ENCODE measurements at regions of chr1 and their contacts with region 1.

Region 1: GRCh38 chr1:233394860-233395717 is 67.6 kb downstream of the MAP3K21 start:
- DNase-seq: peak; percentile 50
- H3K4me3 ChIP-seq: no peak overlapping the region
- H3K27ac ChIP-seq: no peak overlapping the region
- H3K4me1 ChIP-seq: no peaks in the 10 kb centered on the region
- CTCF ChIP-seq: peak; percentile 93

Region 2: DNA sequence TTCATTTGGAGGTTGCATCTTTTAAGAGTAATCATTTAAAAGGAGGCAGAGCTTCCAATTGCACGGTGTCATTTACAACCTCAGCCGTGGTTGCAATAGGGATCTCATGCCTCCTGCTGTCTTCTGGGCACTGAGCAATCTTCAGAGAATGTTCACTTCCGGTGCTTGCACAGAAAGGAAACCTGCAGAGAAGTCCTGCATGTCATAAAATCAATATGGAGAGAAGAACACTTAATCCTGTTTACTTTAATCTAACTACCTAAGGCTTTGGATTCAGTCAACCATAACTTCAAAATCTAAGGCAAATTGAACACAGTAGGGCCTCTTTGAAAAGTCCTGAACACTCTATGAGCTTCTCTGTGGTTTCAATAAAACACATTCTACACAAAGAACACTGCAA is 601.1 kb before region 1 on chr1:
- CTCF ChIA-PET with region 1: no interaction called
- POLR2A ChIA-PET with region 1: no interaction called
- intact Hi-C with region 1: no loop called
- DNase-seq: no peak
- H3K4me3 ChIP-seq: no peak overlapping the region
- H3K27ac ChIP-seq: no peak overlapping the region
- H3K4me1 ChIP-seq: no peaks in the 10 kb centered on the region
- CTCF ChIP-seq: no peak

Region 3: DNA sequence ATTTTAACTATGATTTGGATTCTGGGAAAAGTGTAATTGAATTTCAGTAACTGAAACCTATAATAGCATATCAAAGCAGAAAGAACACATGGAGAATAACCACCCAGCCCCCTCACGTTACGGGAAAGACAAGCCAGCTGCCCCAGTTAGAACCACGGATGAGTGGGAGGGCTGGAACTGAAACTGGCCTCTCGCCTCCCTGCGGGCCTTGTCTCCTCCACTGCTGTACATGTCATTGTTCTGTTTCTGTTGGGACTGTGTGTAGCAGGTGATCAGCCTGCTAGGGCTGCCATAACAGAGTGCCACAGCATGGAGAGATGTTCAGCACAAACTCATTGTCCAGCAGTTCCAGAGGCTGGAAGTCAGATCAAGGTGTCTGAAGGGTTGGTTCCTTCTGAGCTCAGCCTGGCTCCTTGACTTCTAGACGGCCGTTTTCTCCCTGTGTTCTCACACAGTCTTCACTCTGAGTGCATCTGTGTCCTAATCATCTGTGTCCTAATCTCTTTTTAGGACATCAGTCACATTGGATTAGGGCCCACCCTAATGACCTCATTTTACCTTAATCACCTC is 15.1 kb before region 1 on chr1:
- CTCF ChIA-PET with region 1: no interaction called
- POLR2A ChIA-PET with region 1: no interaction called
- intact Hi-C with region 1: no loop called
- DNase-seq: no peak
- H3K4me3 ChIP-seq: no peak overlapping the region
- H3K27ac ChIP-seq: no peak overlapping the region
- H3K4me1 ChIP-seq: no peaks in the 10 kb centered on the region
- CTCF ChIP-seq: no peak

Region 4: DNA sequence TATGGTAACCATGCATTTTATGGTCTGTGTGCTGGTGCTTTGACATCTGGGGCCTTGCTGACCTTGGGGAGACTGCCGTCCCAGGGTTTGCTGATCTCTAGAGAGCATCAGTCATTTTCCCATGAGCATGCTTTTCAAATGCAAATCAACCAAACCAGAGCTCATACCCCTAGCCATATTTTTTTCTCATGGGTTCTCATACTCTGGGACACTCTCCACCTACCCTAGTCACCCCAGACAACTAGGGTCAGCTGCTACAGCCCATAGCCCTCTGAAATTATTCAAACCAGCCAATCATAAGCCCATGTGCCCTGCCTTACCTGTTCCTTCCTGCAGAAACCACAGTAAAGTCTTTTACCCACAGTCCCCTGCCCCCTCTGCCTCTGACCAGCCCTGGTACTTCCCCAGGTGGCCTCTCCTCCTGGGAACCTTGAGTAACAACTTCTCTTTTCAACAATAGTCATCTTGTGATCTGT is 64.4 kb after region 1 on chr1:
- CTCF ChIA-PET with region 1: no interaction called
- POLR2A ChIA-PET with region 1: no interaction called
- intact Hi-C with region 1: no loop called
- DNase-seq: no peak
- H3K4me3 ChIP-seq: no peak overlapping the region
- H3K27ac ChIP-seq: no peak overlapping the region
- H3K4me1 ChIP-seq: no peaks in the 10 kb centered on the region
- CTCF ChIP-seq: no peak

Region 5: GRCh38 chr1:233790662-233791375 is 395.7 kb after region 1 on chr1:
- CTCF ChIA-PET with region 1: no interaction called
- POLR2A ChIA-PET with region 1: interaction called, 4 read pairs
- intact Hi-C with region 1: loop called (anchors 1 kb)
- DNase-seq: peak; percentile 52
- H3K4me3 ChIP-seq: no peak overlapping the region
- H3K27ac ChIP-seq: no peak overlapping the region
- H3K4me1 ChIP-seq: no peaks in the 10 kb centered on the region
- CTCF ChIP-seq: peak; percentile 92

Region 6: GRCh38 chr1:234065794-234066447 is 670.8 kb after region 1 on chr1:
- CTCF ChIA-PET with region 1: no interaction called
- POLR2A ChIA-PET with region 1: no interaction called
- intact Hi-C with region 1: loop called (anchors 5 kb)
- DNase-seq: peak; percentile 59
- H3K4me3 ChIP-seq: no peak overlapping the region
- H3K27ac ChIP-seq: no peak overlapping the region
- H3K4me1 ChIP-seq: no peaks in the 10 kb centered on the region
- CTCF ChIP-seq: peak; percentile 93